ENCODE measurements at regions of chr6 and their contacts with region 1.

Region 1: GRCh38 chr6:30453508-30454116 is 35.7 kb upstream of the HLA-E start:
- DNase-seq: peak; percentile 95
- ATAC-seq: peak; percentile 91
- H3K4me3 Mint-ChIP-seq: no peak overlapping the region
- H3K27ac Mint-ChIP-seq: no peak overlapping the region
- H3K4me1 Mint-ChIP-seq: peaks cover 29% of the 10 kb centered on the region
- H3K27me3 Mint-ChIP-seq: peaks cover 82% of the 10 kb centered on the region
- CTCF ChIP-seq: peak; percentile 70

Region 2: DNA sequence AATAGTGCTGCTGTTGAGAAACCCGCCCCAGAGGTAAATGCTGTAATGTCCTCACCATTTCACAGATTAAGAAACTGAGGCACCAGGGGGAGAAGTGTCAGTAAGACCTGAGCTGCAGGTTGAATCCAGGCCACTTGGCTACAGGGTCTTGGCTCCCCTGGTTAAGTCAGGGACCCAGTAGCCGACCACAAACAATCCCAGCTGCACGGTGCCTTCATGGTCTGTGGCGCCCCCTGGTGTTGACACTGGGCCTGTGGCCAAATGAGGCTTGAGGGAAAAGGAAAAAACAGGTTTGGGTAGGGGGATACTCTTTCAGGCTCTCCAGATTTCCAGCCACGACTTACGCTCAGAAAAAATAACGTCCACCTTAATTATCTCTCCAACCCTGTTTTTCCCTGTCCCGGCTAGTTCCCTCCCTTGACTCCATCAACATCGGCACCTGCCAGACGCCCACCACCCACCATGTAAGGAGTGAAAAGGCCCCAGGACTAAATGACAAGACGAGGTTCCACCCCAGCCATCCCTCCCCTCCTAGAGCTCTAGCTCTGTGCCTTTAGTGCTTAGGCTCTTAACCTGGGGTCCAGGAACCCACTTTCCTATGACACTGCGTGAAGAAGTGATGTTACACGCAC is 440.2 kb before region 1 on chr6:
- CTCF ChIA-PET with region 1: no interaction called
- POLR2A ChIA-PET with region 1: no interaction called
- intact Hi-C with region 1: no loop called
- DNase-seq: peak; percentile 11
- ATAC-seq: peak; percentile 45
- H3K4me3 Mint-ChIP-seq: no peak overlapping the region
- H3K27ac Mint-ChIP-seq: no peak overlapping the region
- H3K4me1 Mint-ChIP-seq: peaks cover 2% of the 10 kb centered on the region
- H3K27me3 Mint-ChIP-seq: no peaks in the 10 kb centered on the region
- CTCF ChIP-seq: peak; percentile 57

Region 3: GRCh38 chr6:30405934-30406333 is 47.7 kb before region 1 on chr6:
- CTCF ChIA-PET with region 1: interaction called, 10 read pairs
- POLR2A ChIA-PET with region 1: no interaction called
- intact Hi-C with region 1: no loop called
- DNase-seq: no peak
- ATAC-seq: no peak
- H3K4me3 Mint-ChIP-seq: no peak overlapping the region
- H3K27ac Mint-ChIP-seq: no peak overlapping the region
- H3K4me1 Mint-ChIP-seq: peaks cover 8% of the 10 kb centered on the region
- H3K27me3 Mint-ChIP-seq: peaks cover 38% of the 10 kb centered on the region
- CTCF ChIP-seq: no peak

Region 4: GRCh38 chr6:30424549-30424948 is 29.1 kb before region 1 on chr6:
- CTCF ChIA-PET with region 1: interaction called, 17 read pairs
- POLR2A ChIA-PET with region 1: no interaction called
- intact Hi-C with region 1: no loop called
- DNase-seq: no peak
- ATAC-seq: no peak
- H3K4me3 Mint-ChIP-seq: no peak overlapping the region
- H3K27ac Mint-ChIP-seq: no peak overlapping the region
- H3K4me1 Mint-ChIP-seq: no peaks in the 10 kb centered on the region
- H3K27me3 Mint-ChIP-seq: peaks cover 48% of the 10 kb centered on the region
- CTCF ChIP-seq: no peak

Region 5: DNA sequence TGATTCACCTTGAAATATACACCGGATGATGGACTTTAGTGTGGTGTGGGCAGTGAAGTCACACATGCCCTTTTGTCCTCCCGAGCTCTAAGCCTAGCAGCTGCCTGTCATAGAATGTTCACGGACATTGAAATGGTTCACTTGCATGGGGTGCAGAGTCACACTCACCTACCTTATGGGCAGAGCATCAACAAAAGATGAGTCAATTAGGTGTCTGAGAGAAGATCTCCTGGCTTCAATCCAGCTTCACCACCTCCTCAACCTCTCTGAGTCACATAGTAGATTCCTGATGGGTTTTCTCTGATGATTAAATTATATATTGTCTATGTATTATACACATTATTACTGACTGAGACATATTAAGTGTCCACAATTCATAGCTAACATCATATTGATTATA is 12.4 kb before region 1 on chr6:
- CTCF ChIA-PET with region 1: interaction called, 33 read pairs
- POLR2A ChIA-PET with region 1: no interaction called
- intact Hi-C with region 1: no loop called
- DNase-seq: peak; percentile 36
- ATAC-seq: peak; percentile 42
- H3K4me3 Mint-ChIP-seq: no peak overlapping the region
- H3K27ac Mint-ChIP-seq: no peak overlapping the region
- H3K4me1 Mint-ChIP-seq: peaks cover 9% of the 10 kb centered on the region
- H3K27me3 Mint-ChIP-seq: peaks cover 54% of the 10 kb centered on the region
- CTCF ChIP-seq: no peak

Region 6: GRCh38 chr6:30463651-30464618 is 10.3 kb after region 1 on chr6:
- CTCF ChIA-PET with region 1: interaction called, 115 read pairs
- POLR2A ChIA-PET with region 1: interaction called, 5 read pairs
- intact Hi-C with region 1: no loop called
- DNase-seq: peak; percentile 78
- ATAC-seq: peak; percentile 64
- H3K4me3 Mint-ChIP-seq: no peak overlapping the region
- H3K27ac Mint-ChIP-seq: no peak overlapping the region
- H3K4me1 Mint-ChIP-seq: peaks cover 20% of the 10 kb centered on the region
- H3K27me3 Mint-ChIP-seq: peaks cover 86% of the 10 kb centered on the region
- CTCF ChIP-seq: no peak